ENCODE measurements at regions of chr19 and their contacts with region 1.

Region 1: GRCh38 chr19:2747349-2747748 is 7.5 kb upstream of the SLC39A3 start:
- DNase-seq: no peak
- ATAC-seq: no peak

Region 2: DNA sequence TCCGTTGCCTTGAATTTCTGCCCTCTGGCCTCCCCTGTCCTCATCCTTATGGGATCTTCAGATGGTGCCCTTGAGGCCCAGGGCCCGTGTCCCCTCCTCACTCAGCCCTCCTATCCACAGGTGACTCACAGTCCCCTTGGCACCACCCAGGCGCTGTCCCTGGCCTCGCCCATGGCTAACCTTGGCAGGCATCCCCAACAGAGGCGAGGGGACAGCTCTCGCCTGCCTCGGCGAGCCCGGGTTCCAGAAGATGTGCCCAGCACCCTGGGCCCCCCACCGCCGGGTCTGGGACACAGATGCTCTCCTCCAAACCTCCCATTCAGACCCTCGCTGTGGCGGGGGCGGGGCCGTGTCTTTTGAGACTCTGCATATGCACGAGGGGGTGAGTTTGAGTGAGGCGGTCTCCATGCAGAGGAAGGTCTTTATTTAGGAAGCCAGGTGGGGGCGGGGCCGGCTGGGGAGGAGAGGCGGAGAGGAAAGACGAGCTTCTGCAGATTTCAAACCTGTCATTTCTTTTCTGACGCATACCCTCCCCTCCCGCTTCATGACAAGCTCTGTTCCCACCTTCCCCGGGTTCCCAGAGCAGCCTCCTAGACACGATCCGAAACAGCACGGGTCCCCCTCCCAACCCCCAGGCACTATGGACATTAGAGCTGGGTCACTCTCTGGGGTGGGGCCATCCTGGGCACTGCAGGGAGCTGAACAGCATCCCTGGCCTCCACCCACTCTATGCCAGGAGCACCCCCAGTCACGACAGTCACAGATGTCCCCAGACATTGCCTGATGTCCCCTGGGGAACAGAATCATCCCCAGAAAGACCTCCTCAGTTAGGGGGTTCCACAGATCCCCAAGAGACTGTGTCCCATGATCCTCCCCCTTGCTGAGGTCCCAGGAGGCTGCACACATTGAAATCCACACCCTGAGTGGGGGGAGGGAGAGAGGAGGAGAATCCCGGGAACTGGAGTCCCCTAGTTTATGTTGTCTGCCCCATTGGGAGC is 93.3 kb before region 1 on chr19:
- intact Hi-C with region 1: loop called (anchors 5 kb)
- DNase-seq: no peak
- ATAC-seq: peak; percentile 49